ENCODE measurements at regions of chr3 and their contacts with region 1.

Region 1: DNA sequence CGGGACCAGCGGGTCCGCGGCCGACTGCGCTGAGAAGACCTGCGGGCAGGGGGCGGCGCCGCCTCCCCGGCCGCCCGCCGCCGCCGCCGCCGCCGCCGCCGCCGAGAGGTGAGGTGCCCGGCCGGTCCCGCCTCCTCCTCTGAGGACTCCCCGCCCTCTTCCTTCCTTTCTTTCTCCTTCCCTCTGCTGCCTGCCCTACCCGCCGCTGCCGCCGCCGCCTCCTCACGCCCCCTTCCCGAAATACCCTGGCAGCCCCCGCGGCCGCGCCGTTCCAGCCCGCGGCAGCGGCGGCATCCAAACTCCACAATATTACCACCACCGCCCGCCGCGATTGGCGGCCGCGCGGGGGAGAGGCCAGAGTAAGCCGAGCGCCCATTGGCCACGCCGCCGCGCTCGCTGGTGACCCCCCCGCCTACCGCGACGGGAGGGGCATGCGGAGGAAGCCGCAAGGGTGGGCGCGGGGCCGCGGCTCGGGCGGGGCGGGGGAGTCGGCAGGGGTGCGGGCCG is 61.8 kb upstream of the ANKRD28 start:
- DNase-seq: peak; percentile 78 to 93 (median 88)
- H3K4me3 ChIP-seq: peak overlapping the region; percentile 64 to 100 (median 92)
- H3K27ac ChIP-seq: peak overlapping the region in 49 of 59 donors; percentile 34 to 91 (median 81)
- H3K27me3 ChIP-seq: no peaks in the 10 kb centered on the region
- CTCF ChIP-seq: peak in 11 of 56 donors; percentile 7 to 34 (median 18)

Region 2: GRCh38 chr3:15820911-15821310 is 38.6 kb before region 1 on chr3:
- intact Hi-C with region 1: loop called in 1 of 2 experiments (anchors 2 kb)
- DNase-seq: no peak
- H3K4me3 ChIP-seq: no peak overlapping the region
- H3K27ac ChIP-seq: peak overlapping the region in 12 of 59 donors; percentile 2 to 26 (median 10)
- H3K27me3 ChIP-seq: no peaks in the 10 kb centered on the region
- CTCF ChIP-seq: peak in 12 of 56 donors; percentile 5 to 22 (median 16)

Region 3: GRCh38 chr3:15933439-15934139 is 74.0 kb after region 1 on chr3:
- intact Hi-C with region 1: loop called (anchors 5 kb)
- DNase-seq: peak in 6 of 10 donors; percentile 36 to 73 (median 52)
- H3K4me3 ChIP-seq: no peak overlapping the region
- H3K27ac ChIP-seq: peak overlapping the region; percentile 28 to 93 (median 84)
- H3K27me3 ChIP-seq: no peaks in the 10 kb centered on the region
- CTCF ChIP-seq: no peak

Region 4: DNA sequence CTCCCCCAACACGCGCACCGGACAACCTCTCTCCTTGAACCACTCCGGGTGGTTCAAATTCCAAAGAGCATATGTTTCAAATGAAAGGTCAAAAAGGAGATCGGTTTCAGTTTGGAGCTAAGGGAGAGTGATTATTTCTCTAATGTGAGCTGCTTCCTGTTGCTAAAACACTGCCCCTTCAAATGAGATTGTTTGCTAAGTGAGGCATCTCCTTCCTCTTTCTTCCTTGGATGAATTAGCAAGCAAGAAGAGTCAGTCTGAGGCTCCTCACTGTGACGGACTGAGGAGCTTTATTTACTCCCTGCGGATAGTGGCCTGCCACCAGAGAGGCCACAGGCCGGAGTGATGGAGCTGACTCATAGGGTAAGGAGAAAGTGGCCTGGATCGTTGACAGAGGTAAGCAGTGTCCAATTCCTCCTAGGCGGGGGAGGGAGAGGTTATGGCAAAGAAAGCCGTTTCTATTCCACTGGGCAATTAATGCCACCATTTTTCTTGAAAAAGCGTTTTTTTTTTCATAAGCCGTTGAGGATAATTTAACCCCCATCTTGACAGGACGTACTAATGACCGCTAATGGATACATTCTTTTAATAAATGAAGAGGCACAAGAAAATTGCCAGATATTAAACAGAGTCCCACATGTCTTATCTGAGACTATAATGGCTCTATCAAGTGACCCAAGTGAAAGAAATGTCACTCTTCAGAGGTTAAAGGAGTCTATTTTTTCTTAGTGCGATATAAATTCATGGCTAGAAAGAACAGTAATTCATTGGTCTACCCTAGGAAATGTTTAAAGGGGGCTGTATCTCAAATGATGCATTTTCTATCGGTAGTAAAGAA is 105.3 kb after region 1 on chr3:
- intact Hi-C with region 1: no loop called
- DNase-seq: no peak
- H3K4me3 ChIP-seq: peak overlapping the region in 14 of 59 donors; percentile 5 to 30 (median 16)
- H3K27ac ChIP-seq: peak overlapping the region in 2 of 59 donors; percentile 9 to 23
- H3K27me3 ChIP-seq: no peaks in the 10 kb centered on the region
- CTCF ChIP-seq: no peak

Region 5: DNA sequence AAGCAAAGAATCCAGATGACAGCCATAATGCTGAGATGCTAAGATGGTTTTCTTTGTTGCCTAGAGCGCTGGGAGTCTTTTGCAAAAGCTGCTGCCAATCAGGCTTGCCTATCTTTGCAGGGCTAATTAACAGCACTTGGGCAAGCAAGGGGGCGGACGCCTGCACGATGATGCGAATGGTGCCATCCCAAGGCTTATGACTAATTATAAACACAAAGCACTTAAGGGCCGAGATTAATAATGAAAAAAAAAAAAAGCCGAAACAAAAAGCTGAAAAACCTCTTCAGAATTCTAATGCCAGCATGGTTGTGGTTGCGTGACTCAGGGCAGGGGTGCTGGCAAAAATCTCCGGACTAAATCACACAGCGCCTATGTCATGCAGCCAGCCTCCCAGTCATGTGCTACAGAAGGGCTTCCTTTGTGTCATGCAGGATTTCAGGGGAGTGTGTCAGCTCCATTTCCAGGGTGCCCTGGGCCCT is 123.1 kb after region 1 on chr3:
- intact Hi-C with region 1: loop called in 1 of 2 experiments (anchors 2 kb)
- DNase-seq: peak in 9 of 10 donors; percentile 47 to 79 (median 59)
- H3K4me3 ChIP-seq: peak overlapping the region in 56 of 59 donors; percentile 9 to 64 (median 38)
- H3K27ac ChIP-seq: peak overlapping the region in 57 of 59 donors; percentile 11 to 87 (median 76)
- H3K27me3 ChIP-seq: no peaks in the 10 kb centered on the region
- CTCF ChIP-seq: peak in 3 of 56 donors; percentile 14 to 43 (median 18)

Region 6: DNA sequence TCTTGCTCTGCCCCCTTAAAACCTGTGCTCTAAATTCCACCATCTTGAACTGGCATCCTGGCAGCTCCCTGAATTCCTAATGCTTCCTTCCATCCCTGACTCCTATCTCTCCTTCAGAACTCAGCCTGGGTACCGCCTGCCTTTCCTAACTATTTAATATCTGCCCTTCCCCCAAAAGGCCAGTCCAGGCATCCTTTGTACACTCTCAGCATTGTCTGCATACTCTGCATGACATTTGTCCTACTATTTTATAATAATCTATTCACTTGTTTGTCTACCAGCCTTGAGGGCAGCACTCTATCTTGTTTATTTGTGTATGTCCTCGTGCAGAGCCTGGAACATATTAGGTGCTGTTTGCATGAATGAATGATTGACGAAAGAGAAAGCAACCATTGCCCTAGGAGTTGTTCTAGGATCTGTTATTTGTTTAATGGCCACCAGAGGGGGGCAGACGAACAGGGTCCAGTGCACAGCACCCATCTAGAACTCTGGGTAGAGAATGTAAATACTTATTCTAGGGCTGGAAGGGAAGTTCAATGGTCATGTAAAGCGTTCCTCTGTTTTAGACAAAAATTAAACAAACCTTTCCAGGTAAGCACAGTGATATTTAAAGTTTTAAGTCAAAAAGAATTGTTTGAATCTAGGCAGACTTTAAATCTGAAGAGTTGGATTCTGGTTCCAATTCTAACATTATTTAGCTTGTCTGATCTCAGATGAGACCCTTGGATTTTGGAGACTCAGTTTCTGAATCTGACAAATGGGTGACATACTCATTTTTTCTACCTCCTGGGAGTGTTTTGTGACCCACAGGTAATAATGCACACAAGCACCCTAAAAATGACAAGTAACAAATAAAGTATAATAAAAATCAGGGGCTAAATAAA is 189.1 kb after region 1 on chr3:
- intact Hi-C with region 1: loop called in 1 of 2 experiments (anchors 10 kb)
- DNase-seq: peak in 5 of 10 donors; percentile 42 to 66 (median 63)
- H3K4me3 ChIP-seq: peak overlapping the region in 46 of 59 donors; percentile 4 to 55 (median 34)
- H3K27ac ChIP-seq: peak overlapping the region in 18 of 59 donors; percentile 7 to 68 (median 38)
- H3K27me3 ChIP-seq: no peaks in the 10 kb centered on the region
- CTCF ChIP-seq: peak; percentile 75 to 97 (median 90)